ENCODE measurements at regions of chr11 and their contacts with region 1.

Region 1: DNA sequence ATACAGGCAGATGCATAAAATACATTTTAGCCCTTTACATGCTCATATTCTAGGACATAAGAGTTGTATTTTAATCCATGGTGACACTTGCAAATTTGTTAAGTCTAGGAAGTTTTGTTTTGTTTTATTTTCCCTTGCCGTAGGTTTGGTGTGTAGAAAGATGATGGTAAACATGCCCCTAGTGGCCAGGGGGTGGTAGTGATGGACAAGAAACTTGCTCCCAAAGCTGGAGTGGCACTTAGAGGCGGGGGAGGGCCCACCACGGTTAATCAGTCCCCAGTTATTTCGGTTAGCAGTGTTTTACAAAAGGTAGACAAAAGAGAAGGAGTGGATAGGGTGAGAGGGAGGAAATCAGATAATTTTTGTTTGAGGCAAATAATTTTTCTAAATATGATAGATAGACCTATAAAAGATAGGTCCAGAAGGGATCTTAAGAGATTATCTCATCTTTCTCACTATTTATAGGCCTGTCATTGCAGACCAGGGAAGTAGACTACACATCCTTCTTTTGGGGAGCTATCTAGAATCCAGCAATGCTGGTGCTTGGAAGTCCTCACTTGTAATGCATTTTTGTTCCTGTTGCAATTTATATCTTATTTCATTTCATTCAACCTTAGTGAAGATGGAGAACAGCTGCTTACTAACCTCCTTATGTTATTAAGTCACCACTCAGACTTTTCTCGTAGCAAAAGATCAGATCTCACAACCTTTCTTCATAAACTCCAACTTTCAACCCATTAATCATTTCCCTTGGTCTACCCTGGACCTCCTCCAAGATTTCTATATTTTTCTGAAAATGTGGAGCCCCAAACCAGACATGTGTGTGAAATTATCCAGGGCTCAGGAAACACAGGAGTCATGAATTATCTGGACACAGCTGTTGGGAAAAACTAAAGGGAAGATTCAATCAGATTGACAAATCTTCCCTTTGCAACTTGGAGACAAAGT is 5.9 kb upstream of the BDNF start:
- DNase-seq: peak; percentile 64
- ATAC-seq: no peak
- H3K4me3 ChIP-seq: no peak overlapping the region
- H3K27ac ChIP-seq: peak overlapping the region; percentile 63; the same call in 1 of the 2 replicates
- H3K4me1 ChIP-seq: peaks cover 8% of the 10 kb centered on the region
- H3K27me3 ChIP-seq: no peaks in the 10 kb centered on the region
- CTCF ChIP-seq: peak; percentile 48
- POLR2A ChIP-seq: no peak
- RAD21 ChIP-seq: peak; percentile 40

Region 2: DNA sequence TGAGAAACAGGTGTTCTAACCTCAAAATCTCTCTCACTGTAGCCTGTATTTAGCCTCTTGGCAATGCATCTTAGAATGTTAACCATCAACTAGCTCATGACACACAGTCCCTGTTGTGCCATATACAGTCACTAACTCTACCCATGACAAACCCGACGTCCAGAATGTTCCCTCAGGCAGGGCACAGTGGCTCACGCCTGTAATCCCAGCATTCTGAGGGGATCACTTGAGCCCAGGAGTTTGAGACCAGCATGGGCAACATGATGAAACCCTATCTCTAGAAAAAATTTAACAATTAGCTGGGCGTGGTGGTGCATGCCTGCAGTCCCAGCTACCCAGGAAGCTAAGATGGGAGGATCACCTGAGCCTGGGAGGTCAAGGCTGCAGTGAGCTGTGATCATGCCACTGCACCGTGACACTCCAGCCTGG is 324.9 kb before region 1 on chr11:
- CTCF ChIA-PET with region 1: no interaction called
- POLR2A ChIA-PET with region 1: no interaction called
- dilution Hi-C with region 1: no loop called
- in situ Hi-C with region 1: no loop called
- intact Hi-C with region 1: no loop called
- DNase-seq: no peak
- ATAC-seq: no peak
- H3K4me3 ChIP-seq: no peak overlapping the region
- H3K27ac ChIP-seq: no peak overlapping the region
- H3K4me1 ChIP-seq: 0 out of 2 replicates have a peak, but pooled peaks cover 1% of the 10 kb centered on the region
- H3K27me3 ChIP-seq: no peaks in the 10 kb centered on the region
- CTCF ChIP-seq: no peak
- POLR2A ChIP-seq: no peak
- RAD21 ChIP-seq: no peak

Region 3: GRCh38 chr11:27642954-27643353 is 63.2 kb before region 1 on chr11:
- CTCF ChIA-PET with region 1: no interaction called
- POLR2A ChIA-PET with region 1: no interaction called
- dilution Hi-C with region 1: no loop called
- in situ Hi-C with region 1: no loop called
- intact Hi-C with region 1: no loop called
- DNase-seq: no peak
- ATAC-seq: no peak
- H3K4me3 ChIP-seq: no peak overlapping the region
- H3K27ac ChIP-seq: no peak overlapping the region
- H3K4me1 ChIP-seq: no peaks in the 10 kb centered on the region
- H3K27me3 ChIP-seq: no peaks in the 10 kb centered on the region
- CTCF ChIP-seq: peak; percentile 23; the same call in 1 of the 2 replicates
- POLR2A ChIP-seq: no peak
- RAD21 ChIP-seq: no peak

Region 4: GRCh38 chr11:28529540-28530410 is 823.6 kb after region 1 on chr11:
- CTCF ChIA-PET with region 1: no interaction called
- POLR2A ChIA-PET with region 1: no interaction called
- dilution Hi-C with region 1: no loop called
- in situ Hi-C with region 1: loop called (anchors 25 kb)
- intact Hi-C with region 1: no loop called
- DNase-seq: peak; percentile 82
- ATAC-seq: peak; percentile 64
- H3K4me3 ChIP-seq: no peak overlapping the region
- H3K27ac ChIP-seq: peak overlapping the region; percentile 19; the same call in 1 of the 2 replicates
- H3K4me1 ChIP-seq: peaks cover 3% of the 10 kb centered on the region; the same call in 1 of the 2 replicates
- H3K27me3 ChIP-seq: no peaks in the 10 kb centered on the region
- CTCF ChIP-seq: peak; percentile 57
- POLR2A ChIP-seq: no peak
- RAD21 ChIP-seq: peak; percentile 59

Measured in IMR-90 (cell line).